ENCODE measurements at regions of chr9 and their contacts with region 1.

Region 1: DNA sequence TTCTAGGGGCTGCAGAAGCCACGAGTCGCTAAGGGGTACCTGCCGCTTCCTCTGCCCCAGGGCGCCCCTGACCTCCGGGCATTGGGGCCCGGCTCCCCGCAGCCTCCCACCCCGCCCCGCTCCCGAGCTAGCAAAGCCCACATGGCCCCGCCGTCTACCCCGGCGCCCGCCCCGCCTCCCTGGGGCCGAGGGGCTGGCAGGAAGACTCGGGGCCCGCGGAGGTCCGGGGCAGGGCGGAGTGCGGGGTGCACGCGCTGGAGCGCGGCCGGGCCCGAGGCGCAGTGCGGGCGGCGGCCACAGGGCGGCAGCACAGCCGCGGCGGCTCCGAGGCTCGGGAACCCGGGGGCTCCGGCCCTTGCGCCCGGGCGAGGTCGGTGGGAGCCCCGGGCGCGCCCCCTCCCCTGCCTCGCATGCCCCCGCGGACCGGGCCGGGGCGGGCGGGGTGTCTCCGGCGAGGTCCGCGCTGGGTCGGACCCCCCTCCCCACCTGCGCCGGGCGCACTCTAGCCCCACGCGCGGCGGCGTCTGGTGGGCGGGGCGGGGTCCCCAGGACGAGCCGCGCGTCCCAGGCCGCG is 6.7 kb downstream of the NRARP start:
- DNase-seq: peak in 1 of 2 experiments; percentile 81
- H3K4me3 ChIP-seq: peak overlapping the region; percentile 42
- H3K4me3 Mint-ChIP-seq: peak overlapping the region; percentile 74
- H3K27ac Mint-ChIP-seq: peak overlapping the region; percentile 98
- H3K4me1 ChIP-seq: peaks cover 30% of the 10 kb centered on the region
- H3K4me1 Mint-ChIP-seq: peaks cover 7% of the 10 kb centered on the region
- H3K27me3 ChIP-seq: no peaks in the 10 kb centered on the region
- H3K27me3 Mint-ChIP-seq: no peaks in the 10 kb centered on the region
- CTCF ChIP-seq: peak in 1 of 2 experiments; percentile 51

Region 2: DNA sequence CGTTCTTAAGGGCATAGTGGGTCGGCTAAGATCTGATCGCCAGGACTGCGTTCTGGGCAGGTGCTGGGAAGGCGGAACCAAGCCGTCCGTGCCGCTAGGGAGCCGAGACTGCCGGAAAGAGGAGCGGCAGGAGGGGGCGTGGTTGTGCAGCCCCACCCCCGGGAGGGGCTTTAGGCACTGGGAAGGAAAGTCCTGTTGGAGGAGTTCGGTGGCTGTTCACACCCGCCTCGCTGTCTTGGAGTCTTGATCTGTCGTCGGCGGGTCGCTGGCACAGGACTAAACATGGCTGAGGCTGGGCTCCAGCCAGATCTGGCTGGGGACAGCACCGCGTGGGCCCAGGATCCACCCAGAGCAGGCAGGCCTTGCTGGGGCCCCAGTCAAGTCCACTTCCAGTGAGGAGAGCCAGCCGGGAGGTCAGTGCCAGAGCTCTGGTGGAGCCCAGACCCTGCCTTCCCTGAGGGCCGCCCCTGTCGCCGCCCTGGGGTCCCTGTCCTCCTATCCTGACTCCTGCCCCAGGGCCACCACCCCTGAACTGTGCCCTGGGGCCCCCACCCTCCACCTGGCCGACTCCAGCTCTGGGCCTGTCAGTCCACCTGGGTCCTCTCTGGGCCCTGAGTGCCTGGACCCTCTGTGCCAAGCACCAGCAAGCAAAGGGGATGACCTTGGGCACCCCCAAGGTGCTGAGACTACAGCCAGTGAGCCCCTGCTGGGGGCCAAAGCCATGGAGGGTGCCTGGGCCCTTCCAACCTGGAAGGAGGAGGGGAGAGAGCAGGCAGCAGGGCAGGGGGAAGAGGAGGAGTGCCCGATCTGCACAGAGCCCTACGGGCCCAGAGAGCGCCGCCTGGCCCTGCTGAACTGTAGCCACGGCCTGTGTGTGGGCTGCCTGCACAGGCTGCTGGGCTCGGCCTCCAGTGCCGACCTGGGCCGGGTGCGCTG is 77.8 kb before region 1 on chr9:
- CTCF ChIA-PET with region 1: no interaction called
- POLR2A ChIA-PET with region 1: no interaction called
- intact Hi-C with region 1: no loop called
- DNase-seq: peak; percentile 83 to 88
- H3K4me3 ChIP-seq: peak overlapping the region; percentile 23
- H3K4me3 Mint-ChIP-seq: peak overlapping the region; percentile 66
- H3K27ac Mint-ChIP-seq: peak overlapping the region; percentile 71
- H3K4me1 ChIP-seq: peaks cover 25% of the 10 kb centered on the region
- H3K4me1 Mint-ChIP-seq: peaks cover 6% of the 10 kb centered on the region
- H3K27me3 ChIP-seq: no peaks in the 10 kb centered on the region
- H3K27me3 Mint-ChIP-seq: no peaks in the 10 kb centered on the region
- CTCF ChIP-seq: no peak

Region 3: DNA sequence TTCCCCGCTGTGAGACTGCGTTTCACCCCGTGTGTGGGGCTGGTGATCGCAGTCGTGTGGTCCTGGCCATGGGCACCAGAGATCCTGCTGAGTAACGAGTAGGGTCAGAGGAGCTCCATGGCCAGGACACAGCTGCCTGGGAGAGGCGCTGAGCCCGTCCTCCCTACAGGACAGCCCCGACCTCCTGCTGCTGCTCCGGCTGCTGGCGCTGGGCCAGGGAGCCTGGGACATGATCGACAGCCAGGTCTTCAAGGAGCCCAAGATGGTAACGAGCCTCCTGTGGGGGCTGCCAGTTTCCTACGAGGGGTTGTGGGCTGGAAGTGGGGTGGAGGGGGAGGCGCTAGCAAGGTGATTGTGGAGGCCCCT is 29.2 kb before region 1 on chr9:
- CTCF ChIA-PET with region 1: no interaction called
- POLR2A ChIA-PET with region 1: interaction called, 11 read pairs
- intact Hi-C with region 1: no loop called
- DNase-seq: no peak
- H3K4me3 ChIP-seq: no peak overlapping the region
- H3K4me3 Mint-ChIP-seq: no peak overlapping the region
- H3K27ac Mint-ChIP-seq: no peak overlapping the region
- H3K4me1 ChIP-seq: no peaks in the 10 kb centered on the region
- H3K4me1 Mint-ChIP-seq: no peaks in the 10 kb centered on the region
- H3K27me3 ChIP-seq: no peaks in the 10 kb centered on the region
- H3K27me3 Mint-ChIP-seq: no peaks in the 10 kb centered on the region
- CTCF ChIP-seq: no peak

Region 4: DNA sequence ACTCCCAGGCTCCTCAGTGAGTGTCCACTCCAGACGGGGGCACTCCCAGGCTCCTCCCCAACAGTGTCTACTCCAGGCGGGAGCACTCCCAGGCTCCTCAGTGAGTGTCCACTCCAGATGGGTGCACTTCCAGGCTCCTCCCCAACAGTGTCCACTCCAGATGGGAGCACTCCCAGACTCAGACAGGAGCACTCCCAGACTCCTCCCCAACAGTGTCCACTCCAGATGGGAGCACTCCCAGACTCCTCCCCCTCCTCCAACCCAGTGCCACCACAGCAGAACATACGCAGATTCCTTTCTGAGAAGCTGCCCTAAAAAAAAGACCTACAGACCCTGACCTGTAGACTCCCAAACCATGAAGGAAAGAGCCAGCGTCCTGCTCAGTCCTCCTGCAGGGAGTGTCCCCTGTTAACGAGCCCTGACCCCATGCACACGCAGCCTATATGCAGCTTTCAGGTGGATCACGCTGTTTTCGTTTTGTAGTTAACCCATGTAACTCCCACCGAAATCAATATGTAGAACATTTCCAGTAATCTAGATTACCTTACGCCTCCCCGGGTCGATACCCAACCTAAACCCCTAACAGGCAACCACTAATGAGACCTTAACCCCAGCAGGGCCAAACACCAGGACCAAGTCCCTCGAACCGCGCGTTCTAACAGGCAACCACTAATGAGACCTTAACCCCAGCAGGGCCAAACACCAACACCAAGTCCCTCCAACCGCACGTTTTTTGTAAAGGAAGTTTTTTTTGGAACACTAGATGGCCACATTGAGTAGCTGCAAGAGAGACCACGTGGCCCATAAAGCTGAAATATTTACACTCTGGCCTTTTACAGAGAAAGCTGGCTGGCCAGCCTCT is 239.2 kb after region 1 on chr9:
- CTCF ChIA-PET with region 1: no interaction called
- POLR2A ChIA-PET with region 1: no interaction called
- intact Hi-C with region 1: loop called (anchors 10 kb)
- DNase-seq: peak; percentile 72 to 77
- H3K4me3 ChIP-seq: no peak overlapping the region
- H3K4me3 Mint-ChIP-seq: peak overlapping the region; percentile 52
- H3K27ac Mint-ChIP-seq: peak overlapping the region; percentile 45
- H3K4me1 ChIP-seq: peaks cover 7% of the 10 kb centered on the region; the same call in 1 of the 2 replicates
- H3K4me1 Mint-ChIP-seq: peaks cover 7% of the 10 kb centered on the region
- H3K27me3 ChIP-seq: no peaks in the 10 kb centered on the region
- H3K27me3 Mint-ChIP-seq: no peaks in the 10 kb centered on the region
- CTCF ChIP-seq: peak; percentile 60 to 75

Measured in Caco-2 (cell line).